PC-3 (cell line): ENCODE measurements at regions of chr14 and their contacts with region 1.

Region 1: GRCh38 chr14:46399049-46399448 is 252.5 kb downstream of the RPL10L start:
- DNase-seq: no peak
- ATAC-seq: no peak
- H3K4me3 ChIP-seq: no peak overlapping the region
- H3K27ac ChIP-seq: no peak overlapping the region
- H3K4me1 ChIP-seq: no peaks in the 10 kb centered on the region
- H3K27me3 ChIP-seq: no peaks in the 10 kb centered on the region
- CTCF ChIP-seq: no peak

Region 2: GRCh38 chr14:46451800-46452199 is 52.8 kb after region 1 on chr14:
- CTCF ChIA-PET with region 1: no interaction called
- POLR2A ChIA-PET with region 1: no interaction called
- intact Hi-C with region 1: loop called (anchors 10 kb)
- DNase-seq: no peak
- ATAC-seq: no peak
- H3K4me3 ChIP-seq: no peak overlapping the region
- H3K27ac ChIP-seq: no peak overlapping the region
- H3K4me1 ChIP-seq: no peaks in the 10 kb centered on the region
- H3K27me3 ChIP-seq: peaks cover 8% of the 10 kb centered on the region
- CTCF ChIP-seq: no peak